HEK293T (cell line): ENCODE measurements at regions of chr17 and their contacts with region 1.

Region 1: GRCh38 chr17:30824356-30825145 is at the start of gene CRLF3:
- DNase-seq: peak; percentile 86

Region 2: GRCh38 chr17:30761058-30761457 is 63.5 kb before region 1 on chr17:
- CTCF ChIA-PET with region 1: no interaction called
- POLR2A ChIA-PET with region 1: no interaction called
- DNase-seq: no peak

Region 3: GRCh38 chr17:30808785-30809286 is 15.7 kb before region 1 on chr17:
- CTCF ChIA-PET with region 1: interaction called, 8 read pairs
- POLR2A ChIA-PET with region 1: interaction called, 14 read pairs
- DNase-seq: no peak

Region 4: DNA sequence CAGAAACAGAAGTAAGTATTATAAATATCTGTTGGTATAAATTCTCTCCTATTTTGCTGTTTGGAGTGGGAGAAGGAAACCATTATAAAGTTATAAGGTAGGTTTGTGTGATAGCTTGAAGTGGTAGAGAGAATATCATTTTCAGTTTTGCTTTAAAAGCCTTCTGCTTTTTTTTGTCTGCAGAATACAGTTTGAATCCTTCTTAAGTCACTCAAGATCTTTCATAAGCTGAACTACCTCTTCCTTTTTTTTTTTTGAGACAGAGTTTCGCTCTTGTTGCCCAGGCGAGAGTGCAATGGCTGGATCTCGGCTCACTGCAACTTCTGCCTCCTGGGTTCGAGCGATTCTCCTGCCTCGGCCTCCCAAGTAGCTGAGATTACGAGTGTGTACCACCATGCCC is 16.2 kb after region 1 on chr17:
- CTCF ChIA-PET with region 1: interaction called, 10 read pairs
- POLR2A ChIA-PET with region 1: interaction called, 5 read pairs
- DNase-seq: no peak

Region 5: GRCh38 chr17:30869005-30869404 is 44.5 kb after region 1 on chr17:
- CTCF ChIA-PET with region 1: no interaction called
- POLR2A ChIA-PET with region 1: no interaction called
- DNase-seq: no peak